Left ventricle myocardium inferior (tissue), 1 donor: ENCODE measurements at regions of chr14 and their contacts with region 1.

Region 1: GRCh38 chr14:24108336-24108874 is 6.2 kb upstream of the DCAF11 start:
- DNase-seq: no peak
- H3K4me3 ChIP-seq: no peak overlapping the region
- H3K27ac ChIP-seq: peak overlapping the region; percentile 37
- H3K4me1 ChIP-seq: peaks cover 13% of the 10 kb centered on the region
- H3K27me3 ChIP-seq: no peaks in the 10 kb centered on the region
- CTCF ChIP-seq: no peak

Region 2: DNA sequence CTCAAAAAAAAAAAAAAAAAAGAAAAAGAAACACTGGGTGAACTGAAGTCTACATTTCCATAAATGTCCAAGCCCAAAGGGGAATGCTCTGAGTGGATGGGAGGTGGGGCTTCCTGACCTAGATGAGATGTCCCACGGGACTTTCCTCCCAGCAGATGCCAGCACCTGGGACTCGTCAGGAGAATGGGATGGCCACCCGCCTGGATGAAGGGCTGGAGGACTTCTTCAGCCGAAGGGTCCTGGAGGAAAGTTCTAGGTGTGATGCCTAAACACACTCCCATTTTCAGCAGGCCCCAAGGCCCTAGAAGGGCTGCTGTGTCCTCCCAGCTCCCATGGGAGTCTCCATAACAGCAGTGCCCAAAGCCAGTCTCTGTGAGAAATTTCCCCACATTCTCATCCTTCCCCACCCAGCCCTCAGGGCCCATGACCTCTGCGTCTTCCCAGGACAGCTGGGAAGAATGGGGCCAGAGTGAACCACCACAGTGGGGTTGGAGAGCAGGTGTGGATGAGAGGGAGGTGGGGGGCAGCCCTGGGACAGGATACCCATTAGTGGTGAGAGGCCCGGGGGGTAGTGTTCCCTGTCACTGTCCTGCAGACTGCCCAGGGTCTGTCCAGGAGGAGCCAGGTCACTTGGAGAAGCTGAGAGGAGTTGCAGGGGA is 44.2 kb before region 1 on chr14:
- intact Hi-C with region 1: loop called (anchors 5 kb)
- DNase-seq: no peak
- H3K4me3 ChIP-seq: no peak overlapping the region
- H3K27ac ChIP-seq: no peak overlapping the region
- H3K4me1 ChIP-seq: no peaks in the 10 kb centered on the region
- H3K27me3 ChIP-seq: peaks cover 6% of the 10 kb centered on the region
- CTCF ChIP-seq: no peak